Posterior cingulate gyrus (tissue), 11 donors: ENCODE measurements at regions of chr13 and their contacts with region 1.

Region 1: GRCh38 chr13:48595431-48596429 is 58.0 kb upstream of the CYSLTR2 start:
- DNase-seq: peak in 6 of 10 donors; percentile 37 to 89 (median 44)

Region 2: GRCh38 chr13:48412881-48413351 is 182.8 kb before region 1 on chr13 and contains the start of gene LPAR6:
- intact Hi-C with region 1: no loop called
- DNase-seq: no peak

Region 3: DNA sequence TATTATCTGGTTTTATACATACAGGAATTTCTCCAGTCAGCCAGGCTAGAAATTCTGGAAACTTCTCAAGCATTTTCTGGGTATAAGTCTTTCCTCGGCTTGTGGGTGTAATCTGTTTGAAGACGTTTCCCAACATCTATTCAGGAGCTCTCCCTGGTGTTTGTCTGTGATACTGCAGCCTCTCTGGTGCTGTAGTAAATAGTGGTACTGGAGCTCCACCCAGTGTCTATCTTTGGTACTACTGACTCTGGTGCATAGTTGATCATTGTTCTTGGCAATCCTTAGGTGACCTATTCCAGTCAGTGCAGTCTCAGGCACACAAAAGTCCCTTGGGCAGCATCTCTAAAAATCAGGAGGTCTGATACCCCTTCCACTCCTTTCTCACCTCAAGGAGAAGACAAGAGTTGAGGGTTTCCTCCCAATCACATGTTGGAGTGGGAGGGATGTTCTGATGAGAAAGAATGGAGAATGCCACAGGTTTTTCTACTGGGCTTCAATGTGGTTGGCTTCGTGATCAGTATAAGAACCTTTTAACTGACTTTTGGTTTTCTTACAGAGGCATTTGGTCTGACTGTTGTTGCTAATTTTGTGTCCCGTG is 173.5 kb after region 1 on chr13:
- intact Hi-C with region 1: loop called (anchors 1 kb)
- DNase-seq: peak in 4 of 10 donors; percentile 23 to 72 (median 56)

Region 4: GRCh38 chr13:49279885-49280284 is 684.2 kb after region 1 on chr13:
- intact Hi-C with region 1: loop called (anchors 2 kb)
- DNase-seq: no peak

Region 5: GRCh38 chr13:49436890-49437289 is 841.2 kb after region 1 on chr13:
- intact Hi-C with region 1: loop called (anchors 10 kb)
- DNase-seq: peak in 5 of 10 donors; percentile 7 to 86 (median 26)